Mammary epithelial cell (primary cell): ENCODE measurements at regions of chr5 and their contacts with region 1.

Region 1: DNA sequence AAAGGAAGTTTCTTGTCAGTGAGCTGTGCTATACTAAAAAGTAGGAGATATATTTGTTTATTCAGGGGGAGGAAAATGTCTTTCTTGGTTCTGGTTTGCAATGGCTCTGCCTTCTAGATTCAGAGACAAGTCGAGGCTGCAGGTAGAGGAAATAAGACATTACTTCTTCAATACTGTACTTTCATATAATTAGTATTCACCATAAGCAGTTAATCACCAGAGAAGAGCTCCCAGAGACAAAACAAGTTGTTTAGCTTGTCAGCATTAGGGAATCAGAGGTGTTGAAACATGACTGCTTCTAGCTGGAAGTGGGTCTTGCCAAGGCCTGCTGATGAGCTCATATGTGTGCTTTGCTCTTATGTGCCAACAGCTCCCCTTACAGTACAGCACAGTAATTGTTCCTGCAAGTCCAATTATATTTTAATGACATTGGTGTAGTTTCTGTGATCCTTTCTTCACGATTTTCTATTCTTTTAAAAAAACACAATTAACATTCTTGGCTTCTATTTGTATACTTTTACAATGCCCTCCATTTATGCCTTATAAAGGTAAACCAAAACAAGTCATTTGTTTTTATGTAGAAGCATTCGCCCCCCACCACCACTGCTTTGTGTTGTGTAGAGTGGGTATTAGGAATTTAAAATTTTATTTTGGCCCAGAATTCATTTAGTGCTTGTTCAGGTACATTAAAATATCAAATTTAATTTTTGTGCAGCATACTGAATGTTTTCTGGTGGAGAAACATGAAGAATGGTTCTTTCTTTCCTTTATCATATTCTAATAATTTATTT is 112.2 kb downstream of the RPS23 start:
- DNase-seq: peak; percentile 86
- H3K4me3 ChIP-seq: no peak overlapping the region
- H3K27ac ChIP-seq: no peak overlapping the region
- H3K4me1 ChIP-seq: peaks cover 23% of the 10 kb centered on the region
- H3K27me3 ChIP-seq: no peaks in the 10 kb centered on the region
- CTCF ChIP-seq: peak; percentile 88 to 92

Region 2: DNA sequence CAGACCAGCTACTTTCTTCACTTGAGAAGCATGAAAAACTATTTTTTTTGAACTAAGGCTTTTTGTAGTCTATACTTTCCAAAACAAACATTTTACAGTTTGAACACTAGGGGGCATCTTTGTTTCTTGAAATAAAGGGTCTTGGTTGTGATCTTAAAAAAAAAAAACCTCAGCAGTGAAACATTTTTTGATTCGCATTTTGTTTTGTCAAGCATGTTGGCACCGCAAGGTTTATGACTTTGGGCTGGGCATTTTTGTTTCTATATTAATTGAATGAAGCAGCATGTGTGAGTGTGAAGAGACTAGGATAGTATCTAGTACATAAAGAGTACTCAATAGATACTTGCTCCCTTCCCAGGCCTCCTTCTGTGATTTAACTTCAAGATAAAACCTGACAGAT is 740.4 kb before region 1 on chr5:
- CTCF ChIA-PET with region 1: interaction called, 8 read pairs
- dilution Hi-C with region 1: no loop called
- in situ Hi-C with region 1: no loop called
- intact Hi-C with region 1: loop called (anchors 1 kb)
- DNase-seq: peak; percentile 27
- H3K4me3 ChIP-seq: no peak overlapping the region
- H3K27ac ChIP-seq: no peak overlapping the region
- H3K4me1 ChIP-seq: peaks cover 7% of the 10 kb centered on the region
- H3K27me3 ChIP-seq: no peaks in the 10 kb centered on the region
- CTCF ChIP-seq: peak; percentile 44 to 48

Region 3: GRCh38 chr5:81513982-81514381 is 652.0 kb before region 1 on chr5:
- CTCF ChIA-PET with region 1: no interaction called
- dilution Hi-C with region 1: no loop called
- in situ Hi-C with region 1: loop called (anchors 10 kb)
- intact Hi-C with region 1: loop called (anchors 2 kb)
- DNase-seq: no peak
- H3K4me3 ChIP-seq: no peak overlapping the region
- H3K27ac ChIP-seq: no peak overlapping the region
- H3K4me1 ChIP-seq: no peaks in the 10 kb centered on the region
- H3K27me3 ChIP-seq: no peaks in the 10 kb centered on the region
- CTCF ChIP-seq: peak; percentile 29 to 34

Region 4: DNA sequence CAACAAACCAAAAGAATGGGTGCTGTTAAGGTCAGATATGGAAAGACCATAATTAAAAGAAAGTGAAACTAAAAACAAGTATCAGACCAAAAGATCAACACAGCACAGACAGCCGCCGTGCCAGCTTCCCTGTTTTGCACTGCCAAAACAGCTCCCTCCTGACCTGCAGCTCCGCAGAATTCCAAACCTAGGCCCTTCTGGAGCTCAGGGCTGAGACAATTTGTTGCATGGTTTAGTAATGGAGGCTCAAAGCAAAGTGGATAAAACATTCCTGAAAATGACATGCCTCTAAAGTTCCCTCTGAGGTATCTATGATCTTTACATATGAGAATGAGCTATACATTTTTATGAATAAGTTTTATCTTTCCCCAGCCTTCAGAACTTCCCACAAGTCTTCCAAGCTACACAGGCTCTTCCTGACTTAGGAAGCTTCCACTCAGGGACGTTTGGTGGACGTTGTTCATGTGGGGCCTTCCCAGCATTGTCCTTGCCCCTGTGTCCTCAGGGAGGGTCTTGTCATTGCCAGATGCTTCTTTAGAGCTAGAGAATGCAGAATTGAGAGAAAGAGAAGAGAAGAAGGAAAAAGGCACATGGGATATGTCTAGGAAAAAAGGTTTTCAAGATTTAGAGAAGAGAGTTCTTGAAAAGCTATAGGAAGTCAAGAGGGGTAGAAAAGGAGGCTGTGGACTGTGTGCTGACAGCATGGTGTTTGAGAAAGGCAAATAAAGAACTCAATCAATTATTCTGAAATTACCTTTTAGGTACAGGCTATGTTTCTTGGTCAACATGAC is 386.6 kb before region 1 on chr5:
- CTCF ChIA-PET with region 1: no interaction called
- dilution Hi-C with region 1: loop called (anchors 5 kb)
- in situ Hi-C with region 1: loop called in 1 of 2 experiments (anchors 25 kb)
- intact Hi-C with region 1: no loop called
- DNase-seq: no peak
- H3K4me3 ChIP-seq: peak overlapping the region in 2 of 3 experiments; percentile 26 to 31
- H3K27ac ChIP-seq: peak overlapping the region; percentile 45
- H3K4me1 ChIP-seq: peaks cover 15% of the 10 kb centered on the region
- H3K27me3 ChIP-seq: no peaks in the 10 kb centered on the region
- CTCF ChIP-seq: no peak

Region 5: DNA sequence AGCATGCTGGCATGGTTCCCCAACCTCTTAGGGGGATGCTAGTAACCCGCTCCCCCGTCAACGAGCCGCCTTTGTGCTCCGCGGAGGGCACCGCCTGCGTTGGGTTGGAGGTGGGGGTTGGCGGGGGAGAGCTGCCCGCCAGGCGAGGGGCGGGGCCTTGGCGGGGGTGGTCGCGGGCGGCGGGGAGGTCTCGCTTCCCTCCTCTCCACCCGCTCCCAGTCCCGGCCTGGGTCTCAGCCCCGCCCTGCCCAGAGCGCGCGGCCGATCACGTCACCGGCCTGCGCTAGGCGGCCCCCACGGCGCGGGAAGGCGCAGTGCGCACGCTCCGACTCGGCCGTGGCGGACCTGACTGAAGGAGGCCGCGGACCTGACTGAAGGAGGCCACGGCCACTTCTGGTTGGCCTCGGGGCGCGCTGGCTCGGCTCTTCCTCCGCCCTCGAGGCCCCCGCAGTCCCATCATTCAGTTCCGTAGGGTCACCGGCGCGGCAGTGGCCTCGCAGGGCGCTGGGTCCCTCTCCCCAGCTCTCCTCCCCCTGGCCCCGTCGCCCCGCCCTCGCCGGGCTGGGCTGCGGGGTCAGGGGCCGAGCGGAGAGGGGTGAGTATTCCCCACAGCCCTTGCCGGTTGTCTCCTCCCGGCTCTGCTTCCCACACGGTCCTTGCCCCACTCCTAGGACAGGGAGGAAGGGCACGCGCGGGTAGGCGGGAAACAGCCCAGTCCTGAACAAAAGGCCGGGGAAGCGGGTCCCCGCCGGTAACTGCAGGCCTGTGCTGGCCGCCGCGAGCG is 194.0 kb before region 1 on chr5 and contains the start of gene ATG10:
- CTCF ChIA-PET with region 1: no interaction called
- dilution Hi-C with region 1: no loop called
- in situ Hi-C with region 1: no loop called
- intact Hi-C with region 1: loop called (anchors 5 kb)
- DNase-seq: peak; percentile 86
- H3K4me3 ChIP-seq: peak within 1 kb of the TSS; percentile 65 to 81 (median 65)
- H3K27ac ChIP-seq: peak within 1 kb of the TSS; percentile 92
- H3K4me1 ChIP-seq: peaks cover 4% of the 10 kb centered on the region
- H3K27me3 ChIP-seq: no peaks in the 10 kb centered on the region
- CTCF ChIP-seq: no peak
- total RNA-seq, gene ATG10: 7.2 to 12.2 TPM

Region 6: DNA sequence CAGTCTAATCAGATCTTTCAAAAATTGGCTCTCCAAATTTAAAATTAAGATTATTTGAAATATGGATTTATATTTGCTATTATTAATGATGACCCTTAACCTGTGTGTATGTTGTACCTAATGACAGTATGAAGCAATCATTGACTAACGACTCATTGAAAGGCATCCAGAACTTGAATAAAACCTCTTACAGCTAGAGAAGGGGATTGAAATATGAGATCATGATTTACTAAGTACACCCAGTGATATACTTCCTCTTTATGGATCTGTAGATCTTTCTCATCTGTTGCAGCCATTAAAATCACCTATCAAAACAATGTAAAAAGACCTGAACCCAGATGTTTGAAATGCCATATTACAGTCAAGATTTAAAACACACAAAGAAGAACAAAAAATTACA is 14.3 kb before region 1 on chr5:
- CTCF ChIA-PET with region 1: interaction called, 11 read pairs
- dilution Hi-C with region 1: no loop called
- in situ Hi-C with region 1: no loop called
- intact Hi-C with region 1: no loop called
- DNase-seq: peak; percentile 3
- H3K4me3 ChIP-seq: no peak overlapping the region
- H3K27ac ChIP-seq: no peak overlapping the region
- H3K4me1 ChIP-seq: peaks cover 10% of the 10 kb centered on the region
- H3K27me3 ChIP-seq: no peaks in the 10 kb centered on the region
- CTCF ChIP-seq: no peak

Region 7: DNA sequence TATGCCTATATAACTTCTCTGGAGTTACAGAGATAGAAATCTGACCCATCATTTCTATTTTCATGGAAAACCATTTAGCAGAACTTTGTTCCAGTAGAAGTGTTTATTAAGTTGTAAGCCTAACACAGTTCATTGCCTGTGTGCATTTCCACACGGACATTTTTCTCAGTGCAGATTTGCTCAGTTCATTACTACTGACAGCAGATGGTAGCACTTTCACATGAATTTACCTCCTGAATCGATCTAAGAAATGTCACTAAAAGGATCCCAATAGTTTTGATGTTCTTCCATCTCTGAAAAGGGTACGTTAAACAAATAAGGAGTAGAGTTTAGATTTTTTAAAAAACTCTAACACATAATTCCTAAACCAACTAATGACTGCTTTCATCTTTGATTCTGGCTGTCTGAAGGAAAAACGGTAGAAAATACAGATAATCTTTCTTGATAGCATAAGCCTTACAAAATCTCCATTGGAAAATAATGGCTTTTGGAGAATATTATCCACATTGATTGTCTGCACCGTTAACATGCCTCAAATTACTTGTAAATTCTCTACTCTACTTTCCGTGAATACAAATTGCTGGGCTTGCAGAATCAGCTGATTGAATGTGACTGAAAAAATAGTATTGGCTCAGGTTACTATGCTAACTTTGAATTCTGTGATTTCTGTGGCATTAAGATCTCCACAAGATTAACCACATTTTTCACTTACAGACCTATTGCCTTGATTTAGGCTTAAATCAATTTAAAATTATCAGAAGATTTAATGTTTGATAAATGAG is 79.1 kb after region 1 on chr5:
- CTCF ChIA-PET with region 1: no interaction called
- dilution Hi-C with region 1: no loop called
- in situ Hi-C with region 1: no loop called
- intact Hi-C with region 1: no loop called
- DNase-seq: no peak
- H3K4me3 ChIP-seq: no peak overlapping the region
- H3K27ac ChIP-seq: no peak overlapping the region
- H3K4me1 ChIP-seq: no peaks in the 10 kb centered on the region
- H3K27me3 ChIP-seq: no peaks in the 10 kb centered on the region
- CTCF ChIP-seq: no peak